ENCODE measurements at regions of chr17 and their contacts with region 1.

Region 1: DNA sequence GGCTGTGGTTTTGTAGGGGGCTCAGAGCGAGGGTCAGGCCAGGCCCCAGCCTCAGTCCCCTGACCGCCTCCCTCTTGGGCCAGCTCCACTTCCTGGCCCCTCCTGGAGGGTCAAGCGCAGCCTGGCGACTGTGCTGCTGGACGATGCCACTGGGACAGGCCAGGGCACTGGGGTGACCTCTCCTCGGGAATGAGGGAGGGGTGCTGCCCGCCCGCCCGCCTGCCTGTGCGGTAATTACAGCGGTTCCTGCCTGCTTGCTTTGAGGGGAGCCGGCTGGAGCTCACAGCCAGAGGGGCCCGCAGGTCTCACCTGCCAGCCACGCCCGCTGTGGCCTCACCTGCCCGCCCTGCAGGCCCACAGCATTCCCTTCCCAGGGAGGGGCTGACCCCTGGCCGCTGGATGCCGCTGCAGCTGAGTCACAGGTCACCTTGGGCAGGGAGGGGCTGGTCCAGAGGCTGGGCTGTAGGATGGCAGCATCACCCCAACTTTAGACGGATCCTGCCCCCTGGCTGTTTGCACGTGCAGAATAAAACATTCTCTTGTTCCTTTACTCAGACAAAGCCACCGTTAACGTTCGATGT is 76.7 kb upstream of the CBX4 start:
- DNase-seq: no peak
- ATAC-seq: no peak
- H3K4me3 ChIP-seq: no peak overlapping the region
- H3K27ac ChIP-seq: no peak overlapping the region
- H3K4me1 ChIP-seq: peaks cover 13 to 17% of the 10 kb centered on the region in 2 donors
- H3K27me3 ChIP-seq: peaks cover 12 to 21% (median 12%) of the 10 kb centered on the region in 3 donors
- CTCF ChIP-seq: peak in 2 of 5 experiments; percentile 18 to 22
- POLR2A ChIP-seq: no peak

Region 2: GRCh38 chr17:79789534-79790353 is 126.2 kb before region 1 on chr17:
- in situ Hi-C with region 1: no loop called
- intact Hi-C with region 1: loop called (anchors 5 kb)
- DNase-seq: no peak
- ATAC-seq: peak; percentile 39 to 58
- H3K4me3 ChIP-seq: peak overlapping the region in 2 of 4 donors; percentile 0 to 8
- H3K27ac ChIP-seq: no peak overlapping the region
- H3K4me1 ChIP-seq: peaks cover 7 to 21% of the 10 kb centered on the region in 2 donors
- H3K27me3 ChIP-seq: peaks cover 71 to 84% (median 80%) of the 10 kb centered on the region in 3 donors
- CTCF ChIP-seq: peak; percentile 68 to 82 (median 79)
- POLR2A ChIP-seq: no peak

Region 3: DNA sequence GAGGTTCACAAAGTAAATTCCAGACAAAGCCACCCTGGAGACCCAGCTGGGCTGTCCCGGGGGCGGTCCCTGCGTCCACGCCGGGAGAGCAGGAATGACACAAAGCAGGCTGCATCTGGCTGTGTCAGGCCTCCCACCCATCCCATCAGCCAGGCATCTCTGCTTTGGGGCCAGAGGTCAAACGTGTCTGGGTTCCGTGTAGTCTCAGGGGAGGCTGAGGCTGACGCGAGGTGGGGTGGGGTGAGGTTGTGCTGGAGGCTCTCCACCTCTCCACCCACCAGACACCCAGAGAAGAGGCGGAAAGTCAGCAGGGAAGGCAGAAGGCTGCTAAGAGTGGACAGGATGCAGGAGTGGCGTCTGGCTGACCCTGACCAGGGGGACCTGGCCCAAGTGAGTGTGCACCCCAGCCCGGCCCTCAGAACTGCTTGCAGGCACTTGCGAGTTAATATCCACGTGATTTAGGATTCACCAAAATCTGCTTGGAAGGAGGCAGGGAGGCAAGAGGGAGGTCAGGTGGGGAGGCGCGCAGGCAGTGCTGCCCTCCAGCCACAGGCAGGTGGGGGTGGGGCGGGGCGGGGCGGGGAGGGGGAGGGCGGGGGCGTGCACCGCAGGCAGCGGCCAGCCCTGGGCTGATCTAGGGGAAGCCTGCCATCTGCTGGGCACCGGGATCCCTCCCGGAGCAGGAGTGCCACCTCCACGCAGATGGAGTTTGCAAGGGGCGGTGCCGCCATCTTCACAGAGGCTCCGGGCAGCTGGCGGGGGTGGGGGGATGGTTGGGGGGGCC is 75.4 kb after region 1 on chr17:
- in situ Hi-C with region 1: no loop called
- intact Hi-C with region 1: no loop called
- DNase-seq: peak; percentile 22 to 56
- ATAC-seq: peak; percentile 29 to 62
- H3K4me3 ChIP-seq: peak overlapping the region in 1 of 4 donors; percentile 3
- H3K27ac ChIP-seq: no peak overlapping the region
- H3K4me1 ChIP-seq: peaks cover 5 to 7% of the 10 kb centered on the region in 2 donors
- H3K27me3 ChIP-seq: peaks cover 3 to 12% (median 12%) of the 10 kb centered on the region in 3 donors
- CTCF ChIP-seq: peak in 2 of 5 experiments; percentile 60 to 67
- POLR2A ChIP-seq: no peak

Measured in gastrocnemius medialis (tissue), 4 donors.